Sigmoid colon (tissue), 7 donors: ENCODE measurements at regions of chr1 and their contacts with region 1.

Region 1: DNA sequence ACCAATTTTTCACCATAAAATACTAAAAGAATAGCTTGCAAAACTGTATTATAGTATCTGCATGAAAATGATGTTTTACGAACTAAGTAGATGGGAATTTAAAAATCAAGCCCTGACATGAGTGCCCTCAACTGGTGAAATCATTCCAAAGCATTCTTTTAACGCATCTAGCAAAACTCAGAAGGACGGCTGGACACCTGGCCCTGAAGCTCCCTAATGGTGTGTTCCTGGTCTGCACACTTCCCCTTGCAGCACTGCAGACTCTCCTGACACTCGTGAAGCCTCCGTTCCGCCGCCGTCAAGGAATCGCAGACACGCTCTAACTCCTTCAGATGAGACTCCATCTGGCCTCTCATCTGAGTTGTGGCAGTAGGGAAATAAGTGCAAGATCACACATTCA is 39.9 kb downstream of the ODF2L start:
- DNase-seq: no peak
- H3K4me3 ChIP-seq: no peak overlapping the region
- H3K27ac ChIP-seq: no peak overlapping the region
- H3K4me1 ChIP-seq: no peaks in the 10 kb centered on the region
- H3K27me3 ChIP-seq: no peaks in the 10 kb centered on the region
- CTCF ChIP-seq: peak in 1 of 4 experiments; percentile 34
- EP300 ChIP-seq: no peak
- POLR2A ChIP-seq: no peak

Region 2: DNA sequence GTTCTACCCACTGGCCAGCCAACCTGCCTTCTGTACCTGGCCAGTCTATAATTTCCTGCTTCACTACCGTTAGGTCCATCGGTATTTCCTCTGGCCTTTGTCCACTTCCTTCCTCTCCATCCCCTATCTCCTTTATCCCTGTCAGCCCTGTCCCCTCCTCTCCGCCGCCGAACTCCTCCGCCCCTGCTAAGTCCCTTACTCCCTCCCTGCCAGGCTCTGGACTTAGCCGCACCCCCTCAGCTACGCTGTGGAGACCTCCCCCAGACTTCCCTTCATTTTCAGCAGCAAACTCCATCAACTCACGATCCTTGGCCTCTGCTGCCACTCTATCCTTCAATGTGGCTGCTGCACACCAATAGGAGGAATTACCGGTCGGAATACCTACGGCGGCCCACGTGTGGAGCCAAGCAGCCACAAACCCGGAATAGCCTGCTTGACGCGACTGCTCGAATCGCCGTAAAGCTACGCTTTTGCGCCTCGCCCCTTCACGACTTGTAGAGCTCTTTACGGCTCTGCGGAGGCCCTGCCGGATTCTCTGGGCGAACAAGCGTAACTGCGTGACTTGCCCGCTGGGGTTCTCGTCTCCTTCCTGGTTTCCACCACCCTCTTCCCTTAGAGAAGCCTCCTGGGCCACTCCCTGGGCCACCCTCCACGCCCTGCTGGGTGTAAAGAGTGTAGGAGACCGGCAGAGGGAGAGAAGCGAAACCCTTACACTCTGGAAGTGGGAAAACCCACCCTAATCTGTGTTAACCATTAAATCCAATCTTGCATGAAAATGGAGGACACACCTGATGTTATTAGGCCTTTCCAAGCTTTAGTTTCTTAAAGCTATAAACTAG is 648.0 kb before region 1 on chr1 and contains the start of gene ZNHIT6:
- intact Hi-C with region 1: loop called (anchors 10 kb)
- DNase-seq: peak; percentile 94
- H3K4me3 ChIP-seq: peak within 1 kb of the TSS; percentile 62 to 74 (median 70)
- H3K27ac ChIP-seq: peak within 1 kb of the TSS; percentile 78 to 86 (median 82)
- H3K4me1 ChIP-seq: peaks cover 0 to 23% (median 16%) of the 10 kb centered on the region in 4 donors
- H3K27me3 ChIP-seq: no peaks in the 10 kb centered on the region
- CTCF ChIP-seq: peak in 3 of 4 experiments; percentile 13 to 41 (median 35)
- EP300 ChIP-seq: no peak
- POLR2A ChIP-seq: peak in 1 of 2 donors; percentile 16
- total RNA-seq, gene ZNHIT6: 12.5 to 20.0 (median 15.8) TPM